Activated CD8-positive, alpha-beta T cell treated with anti-CD3 and anti-CD28 coated beads, Interleukin-2, amount 10 ng/mL, durations not matched to agents 7 days and 5 days (primary cell): ENCODE measurements at regions of chr5 and their contacts with region 1.

Region 1: DNA sequence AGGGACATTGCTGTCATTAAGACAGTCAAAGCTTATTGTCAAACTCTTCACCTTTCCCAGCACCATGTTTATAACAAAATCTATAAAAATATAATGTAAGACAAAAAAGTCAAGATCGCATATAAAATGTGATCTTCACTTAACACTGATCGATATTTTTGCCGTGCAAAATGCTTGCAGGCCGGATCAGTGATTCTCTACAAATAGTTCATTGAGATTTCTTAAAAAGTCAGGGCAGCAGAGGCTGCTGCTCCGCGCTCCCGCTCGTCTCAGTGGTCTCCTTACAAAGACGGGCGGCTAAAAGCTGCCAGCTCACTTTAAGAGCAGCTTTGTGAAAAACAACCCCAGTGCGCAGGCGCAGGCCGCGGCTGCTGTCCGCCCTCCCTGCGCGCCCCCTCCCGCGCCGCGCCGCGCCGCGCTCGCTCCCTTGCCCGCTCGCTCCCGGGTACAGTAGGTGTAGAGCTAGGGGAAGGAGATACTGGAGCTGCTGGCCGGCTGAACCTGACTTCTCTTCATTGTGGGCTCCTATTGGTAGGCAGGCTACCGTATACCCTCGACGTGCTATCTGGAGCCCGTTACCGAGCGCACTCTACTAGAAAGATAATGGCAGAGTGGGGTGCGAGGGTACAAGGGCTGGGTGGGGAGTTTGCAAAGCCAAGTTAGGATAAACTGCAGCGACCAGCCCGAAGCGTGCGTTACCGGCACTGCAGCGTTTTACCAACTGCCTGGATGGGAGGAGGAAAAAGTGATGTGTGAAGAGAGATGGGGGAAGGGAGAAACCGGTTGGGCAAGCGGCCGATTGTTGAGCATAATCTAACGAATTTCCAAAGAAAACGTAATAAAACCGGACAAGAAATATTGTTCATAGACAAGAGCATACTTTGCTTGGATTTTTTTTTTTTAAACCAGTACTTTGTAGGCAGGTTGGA is at the start of gene ARRDC3:
- DNase-seq: peak; percentile 97
- ATAC-seq: peak; percentile 59
- H3K4me3 Mint-ChIP-seq: peak within 1 kb of the TSS; percentile 87
- H3K27ac Mint-ChIP-seq: peak within 1 kb of the TSS; percentile 99
- H3K4me1 Mint-ChIP-seq: peaks cover 22% of the 10 kb centered on the region
- H3K27me3 Mint-ChIP-seq: peaks cover 2% of the 10 kb centered on the region
- total RNA-seq, gene ARRDC3: 36.5 to 37.1 TPM

Region 2: GRCh38 chr5:90529194-90529938 is 853.9 kb before region 1 on chr5 and contains the start of gene LYSMD3:
- CTCF ChIA-PET with region 1: no interaction called
- POLR2A ChIA-PET with region 1: no interaction called
- DNase-seq: peak; percentile 98
- ATAC-seq: peak; percentile 95
- H3K4me3 Mint-ChIP-seq: peak within 1 kb of the TSS; percentile 95
- H3K27ac Mint-ChIP-seq: peak within 1 kb of the TSS; percentile 97
- H3K4me1 Mint-ChIP-seq: peaks cover 26% of the 10 kb centered on the region
- H3K27me3 Mint-ChIP-seq: peaks cover 20% of the 10 kb centered on the region
- total RNA-seq, gene LYSMD3: 18.3 to 19.0 TPM

Region 3: GRCh38 chr5:90932052-90932699 is 451.1 kb before region 1 on chr5:
- CTCF ChIA-PET with region 1: interaction called, 65 read pairs
- POLR2A ChIA-PET with region 1: no interaction called
- DNase-seq: peak; percentile 56
- ATAC-seq: no peak
- H3K4me3 Mint-ChIP-seq: no peak overlapping the region
- H3K27ac Mint-ChIP-seq: no peak overlapping the region
- H3K4me1 Mint-ChIP-seq: peaks cover 5% of the 10 kb centered on the region
- H3K27me3 Mint-ChIP-seq: peaks cover 4% of the 10 kb centered on the region

Region 4: DNA sequence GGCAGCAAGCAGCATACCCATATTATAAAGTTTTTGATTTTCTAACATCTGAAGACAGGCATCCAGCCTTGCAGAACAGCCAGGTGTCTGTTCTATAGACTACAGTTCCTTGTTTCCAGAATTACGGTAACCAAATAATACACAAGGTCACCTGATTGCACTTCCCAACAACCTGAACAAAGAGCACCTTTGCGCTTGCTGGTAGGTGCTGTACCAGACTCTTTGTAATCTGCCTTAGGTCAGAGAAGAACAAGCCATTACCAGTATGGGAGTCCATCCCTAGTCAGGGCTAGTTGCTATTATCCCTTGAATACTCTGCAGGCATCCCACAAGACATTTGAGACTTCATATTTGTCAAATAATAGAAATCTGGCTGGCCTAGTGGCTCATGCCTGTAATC is 256.4 kb before region 1 on chr5:
- CTCF ChIA-PET with region 1: interaction called, 13 read pairs
- POLR2A ChIA-PET with region 1: interaction called, 3 read pairs
- DNase-seq: no peak
- ATAC-seq: no peak
- H3K4me3 Mint-ChIP-seq: no peak overlapping the region
- H3K27ac Mint-ChIP-seq: no peak overlapping the region
- H3K4me1 Mint-ChIP-seq: no peaks in the 10 kb centered on the region
- H3K27me3 Mint-ChIP-seq: peaks cover 11% of the 10 kb centered on the region

Region 5: GRCh38 chr5:91225848-91226686 is 157.2 kb before region 1 on chr5:
- CTCF ChIA-PET with region 1: interaction called, 230 read pairs
- POLR2A ChIA-PET with region 1: interaction called, 9 read pairs
- DNase-seq: peak; percentile 71
- ATAC-seq: peak; percentile 71
- H3K4me3 Mint-ChIP-seq: no peak overlapping the region
- H3K27ac Mint-ChIP-seq: no peak overlapping the region
- H3K4me1 Mint-ChIP-seq: no peaks in the 10 kb centered on the region
- H3K27me3 Mint-ChIP-seq: peaks cover 4% of the 10 kb centered on the region

Region 6: GRCh38 chr5:91272858-91273257 is 110.4 kb before region 1 on chr5:
- CTCF ChIA-PET with region 1: interaction called, 38 read pairs
- POLR2A ChIA-PET with region 1: interaction called, 18 read pairs
- DNase-seq: peak; percentile 31
- ATAC-seq: peak; percentile 74
- H3K4me3 Mint-ChIP-seq: no peak overlapping the region
- H3K27ac Mint-ChIP-seq: no peak overlapping the region
- H3K4me1 Mint-ChIP-seq: peaks cover 26% of the 10 kb centered on the region
- H3K27me3 Mint-ChIP-seq: peaks cover 2% of the 10 kb centered on the region

Region 7: GRCh38 chr5:91332267-91333045 is 50.8 kb before region 1 on chr5:
- CTCF ChIA-PET with region 1: interaction called, 4 read pairs
- POLR2A ChIA-PET with region 1: interaction called, 12 read pairs
- DNase-seq: peak; percentile 44
- ATAC-seq: peak; percentile 69
- H3K4me3 Mint-ChIP-seq: no peak overlapping the region
- H3K27ac Mint-ChIP-seq: peak overlapping the region; percentile 19
- H3K4me1 Mint-ChIP-seq: peaks cover 30% of the 10 kb centered on the region
- H3K27me3 Mint-ChIP-seq: no peaks in the 10 kb centered on the region

Region 8: DNA sequence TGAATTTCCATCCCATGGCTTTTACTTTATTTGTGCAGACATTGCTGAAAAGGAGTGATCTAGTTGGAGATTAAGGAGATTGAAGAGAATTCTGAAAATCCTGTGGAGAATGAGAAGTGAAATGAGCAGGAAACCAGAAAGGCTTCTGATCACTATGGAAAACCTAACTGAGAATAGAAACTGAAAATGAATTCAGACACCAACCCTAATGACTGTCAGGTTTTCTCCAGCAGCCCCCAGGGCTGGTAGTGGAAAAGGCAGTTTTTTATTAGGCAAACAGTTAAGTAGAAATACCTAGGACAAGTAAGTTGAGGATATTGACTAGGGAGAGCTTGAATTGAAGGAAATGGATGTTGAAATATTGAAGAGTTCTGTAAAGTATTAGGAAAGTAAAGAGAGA is 14.5 kb after region 1 on chr5:
- CTCF ChIA-PET with region 1: interaction called, 24 read pairs
- POLR2A ChIA-PET with region 1: interaction called, 5 read pairs
- DNase-seq: no peak
- ATAC-seq: no peak
- H3K4me3 Mint-ChIP-seq: no peak overlapping the region
- H3K27ac Mint-ChIP-seq: peak overlapping the region; percentile 53
- H3K4me1 Mint-ChIP-seq: peaks cover 12% of the 10 kb centered on the region
- H3K27me3 Mint-ChIP-seq: no peaks in the 10 kb centered on the region